ENCODE measurements at regions of chr7 and their contacts with region 1.

Region 1: DNA sequence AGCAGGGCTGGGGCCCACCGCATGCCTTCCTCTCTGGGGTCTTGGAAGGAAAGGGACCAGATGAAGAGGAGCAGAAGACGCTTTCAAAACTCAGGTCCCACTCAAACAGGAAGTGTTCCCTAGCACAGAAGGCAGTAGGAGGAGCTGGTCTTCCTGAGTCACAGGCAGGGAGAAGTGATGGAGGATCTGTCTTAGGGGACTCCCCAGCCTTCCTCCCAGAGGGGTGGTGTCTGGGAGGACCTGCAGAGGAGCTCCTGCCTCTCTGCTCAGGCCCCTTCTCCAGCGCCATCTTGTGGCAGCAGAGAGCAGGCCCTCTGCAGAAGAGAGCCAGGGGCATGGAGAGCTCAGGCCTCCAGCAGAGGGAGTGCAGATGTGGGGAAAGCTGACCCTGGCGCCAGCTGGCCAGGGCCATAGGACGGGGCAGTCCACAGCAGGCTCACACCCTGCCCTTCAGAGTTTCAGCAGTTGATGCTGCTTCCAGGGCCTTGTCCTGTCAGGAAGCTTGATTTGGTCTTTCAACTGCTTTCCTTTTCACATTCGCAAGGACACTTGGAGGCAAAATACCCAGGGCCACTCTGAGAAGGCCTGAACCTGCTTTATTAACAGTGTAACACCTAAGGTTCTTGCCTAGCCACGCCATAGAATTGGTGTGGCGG is 62.2 kb upstream of the TARP start:
- DNase-seq: peak; percentile 53 to 80
- H3K4me3 ChIP-seq: no peak overlapping the region
- H3K27ac ChIP-seq: no peak overlapping the region
- H3K4me1 ChIP-seq: no peaks in the 10 kb centered on the region
- H3K27me3 ChIP-seq: no peaks in the 10 kb centered on the region
- CTCF ChIP-seq: peak; percentile 68

Region 2: GRCh38 chr7:39574673-39575349 is 1239.2 kb after region 1 on chr7:
- CTCF ChIA-PET with region 1: interaction called, 20 read pairs
- POLR2A ChIA-PET with region 1: no interaction called
- intact Hi-C with region 1: no loop called
- DNase-seq: no peak
- H3K4me3 ChIP-seq: no peak overlapping the region
- H3K27ac ChIP-seq: no peak overlapping the region
- H3K4me1 ChIP-seq: no peaks in the 10 kb centered on the region
- H3K27me3 ChIP-seq: no peaks in the 10 kb centered on the region
- CTCF ChIP-seq: no peak